ENCODE measurements at regions of chr9 and their contacts with region 1.

Region 1: GRCh38 chr9:98848450-98849149 is 41.1 kb downstream of the GALNT12 start:
- DNase-seq: peak; percentile 90 to 95
- H3K4me3 ChIP-seq: no peak overlapping the region
- H3K27ac ChIP-seq: peak overlapping the region; percentile 48
- H3K4me1 ChIP-seq: peaks cover 22% of the 10 kb centered on the region
- H3K27me3 ChIP-seq: no peaks in the 10 kb centered on the region
- CTCF ChIP-seq: peak; percentile 89

Region 2: GRCh38 chr9:98207606-98208005 is 641.0 kb before region 1 on chr9:
- CTCF ChIA-PET with region 1: no interaction called
- POLR2A ChIA-PET with region 1: no interaction called
- intact Hi-C with region 1: loop called (anchors 2 kb)
- DNase-seq: no peak
- H3K4me3 ChIP-seq: no peak overlapping the region
- H3K27ac ChIP-seq: no peak overlapping the region
- H3K4me1 ChIP-seq: no peaks in the 10 kb centered on the region; the same call in 1 of the 2 replicates
- H3K27me3 ChIP-seq: no peaks in the 10 kb centered on the region
- CTCF ChIP-seq: no peak

Region 3: GRCh38 chr9:98807070-98807810 is 41.4 kb before region 1 on chr9 and contains the start of gene GALNT12:
- CTCF ChIA-PET with region 1: interaction called, 6 read pairs
- POLR2A ChIA-PET with region 1: no interaction called
- intact Hi-C with region 1: loop called (anchors 1 kb)
- DNase-seq: peak; percentile 40 to 56
- H3K4me3 ChIP-seq: peak within 1 kb of the TSS; percentile 87
- H3K27ac ChIP-seq: peak within 1 kb of the TSS; percentile 77
- H3K4me1 ChIP-seq: peaks cover 86% of the 10 kb centered on the region
- H3K27me3 ChIP-seq: no peaks in the 10 kb centered on the region
- CTCF ChIP-seq: no peak
- total RNA-seq, gene GALNT12: 50.3 and 52.9 TPM in 2 replicates

Region 4: DNA sequence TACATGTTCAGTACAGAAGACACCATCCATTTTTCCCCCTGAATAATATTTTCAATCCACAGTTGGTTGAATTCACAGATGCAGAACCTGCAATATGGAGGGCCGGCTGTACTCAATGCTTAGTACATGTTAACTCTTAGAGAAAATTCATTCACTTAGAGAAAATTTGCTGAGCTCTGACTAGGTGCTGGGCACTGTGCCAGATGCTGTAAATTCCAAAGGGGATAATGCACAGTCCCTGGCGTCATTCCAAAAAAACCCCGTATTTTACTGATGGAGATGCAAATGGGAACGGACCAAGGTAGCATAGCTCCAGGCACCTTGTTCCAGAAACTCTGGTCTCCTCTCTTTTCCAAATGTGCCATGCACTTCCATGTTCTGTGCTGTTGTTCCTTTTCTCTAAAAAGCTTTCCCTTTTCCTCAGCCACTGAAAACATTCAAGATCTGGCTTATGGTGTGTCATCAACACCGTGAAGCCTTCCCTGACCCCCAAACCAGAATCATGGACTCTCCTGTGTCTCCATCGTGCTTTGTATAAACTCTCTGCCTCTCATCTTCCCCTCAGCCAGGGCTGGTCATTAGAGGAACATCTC is 39.4 kb after region 1 on chr9:
- CTCF ChIA-PET with region 1: no interaction called
- POLR2A ChIA-PET with region 1: no interaction called
- intact Hi-C with region 1: no loop called
- DNase-seq: no peak
- H3K4me3 ChIP-seq: no peak overlapping the region
- H3K27ac ChIP-seq: no peak overlapping the region
- H3K4me1 ChIP-seq: no peaks in the 10 kb centered on the region
- H3K27me3 ChIP-seq: peaks cover 44% of the 10 kb centered on the region
- CTCF ChIP-seq: no peak

Region 5: GRCh38 chr9:99140685-99141314 is 292.2 kb after region 1 on chr9:
- CTCF ChIA-PET with region 1: interaction called, 4 read pairs
- POLR2A ChIA-PET with region 1: no interaction called
- intact Hi-C with region 1: loop called (anchors 1 kb)
- DNase-seq: peak in 1 of 2 experiments; percentile 34
- H3K4me3 ChIP-seq: no peak overlapping the region
- H3K27ac ChIP-seq: no peak overlapping the region
- H3K4me1 ChIP-seq: no peaks in the 10 kb centered on the region
- H3K27me3 ChIP-seq: no peaks in the 10 kb centered on the region
- CTCF ChIP-seq: peak; percentile 74

Region 6: GRCh38 chr9:99184475-99185347 is 336.1 kb after region 1 on chr9:
- CTCF ChIA-PET with region 1: interaction called, 16 read pairs
- POLR2A ChIA-PET with region 1: no interaction called
- intact Hi-C with region 1: no loop called
- DNase-seq: peak; percentile 59 to 75
- H3K4me3 ChIP-seq: no peak overlapping the region
- H3K27ac ChIP-seq: no peak overlapping the region
- H3K4me1 ChIP-seq: no peaks in the 10 kb centered on the region
- H3K27me3 ChIP-seq: peaks cover 9% of the 10 kb centered on the region; the same call in 1 of the 2 replicates
- CTCF ChIP-seq: peak; percentile 90